Astrocyte of the cerebellum (primary cell): ENCODE measurements at regions of chr1 and their contacts with region 1.

Region 1: GRCh38 chr1:11868331-11868955 is 9.7 kb upstream of the NPPB start:
- DNase-seq: no peak
- H3K4me3 ChIP-seq: no peak overlapping the region
- CTCF ChIP-seq: no peak

Region 2: GRCh38 chr1:11772458-11772857 is 96.0 kb before region 1 on chr1:
- in situ Hi-C with region 1: loop called (anchors 5 kb)
- DNase-seq: no peak
- H3K4me3 ChIP-seq: no peak overlapping the region
- CTCF ChIP-seq: no peak